MCF 10A (cell line): ENCODE measurements at regions of chr1 and their contacts with region 1.

Region 1: DNA sequence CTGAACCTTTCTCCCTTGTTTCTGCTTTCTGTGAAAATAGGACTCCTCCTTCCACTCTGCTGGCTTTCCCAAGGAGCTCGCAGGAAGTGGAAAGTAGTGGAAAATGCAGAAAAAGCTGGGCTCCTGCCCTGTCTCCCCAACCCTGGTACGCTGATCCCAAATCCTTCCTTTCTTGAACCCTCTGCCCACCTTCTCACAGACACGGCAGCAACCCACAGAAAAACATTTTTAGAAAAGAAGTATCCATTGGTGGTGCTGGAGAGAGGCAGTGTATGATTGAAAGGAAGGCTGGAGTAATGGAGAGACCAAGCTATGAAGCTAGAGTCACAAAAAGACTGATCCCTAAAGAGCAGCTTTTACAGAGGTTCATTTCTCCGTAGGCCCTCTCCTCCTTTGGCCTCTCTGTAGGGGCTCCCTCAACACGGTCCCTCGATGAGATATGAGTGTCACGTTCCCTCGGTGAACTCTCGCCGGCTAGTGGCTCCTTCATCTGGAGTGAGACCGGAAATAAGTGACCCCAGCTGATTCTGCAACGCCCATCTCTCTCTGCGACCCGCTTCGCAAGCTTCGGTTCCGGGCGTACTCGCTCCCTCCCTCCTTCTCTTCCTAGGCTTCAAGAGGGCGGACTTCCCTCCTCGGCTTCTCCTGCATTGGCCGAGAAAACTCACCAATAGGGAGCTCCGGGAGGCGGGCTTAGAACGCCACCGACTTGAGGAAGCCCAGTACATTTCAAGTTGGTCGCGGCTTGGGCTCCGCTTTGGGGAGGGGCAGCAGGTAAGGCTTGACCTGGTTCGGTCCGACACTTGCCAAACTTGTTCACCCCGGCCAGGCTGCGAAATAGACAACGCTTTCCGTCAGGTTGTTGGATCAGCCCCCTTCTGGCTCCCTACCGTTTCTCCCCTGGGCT is at the starts of genes ANKRD34A and POLR3GL:
- DNase-seq: peak; percentile 98
- H3K4me3 Mint-ChIP-seq: peak within 1 kb of the TSS; percentile 92
- H3K27ac Mint-ChIP-seq: peak within 1 kb of the TSS; percentile 96
- H3K4me1 Mint-ChIP-seq: peaks cover 42% of the 10 kb centered on the region
- H3K27me3 Mint-ChIP-seq: no peaks in the 10 kb centered on the region
- CTCF ChIP-seq: no peak
- total RNA-seq, gene ANKRD34A: 2.6 and 3.1 TPM in 2 replicates
- total RNA-seq, gene POLR3GL: 17.6 and 20.9 TPM in 2 replicates

Region 2: DNA sequence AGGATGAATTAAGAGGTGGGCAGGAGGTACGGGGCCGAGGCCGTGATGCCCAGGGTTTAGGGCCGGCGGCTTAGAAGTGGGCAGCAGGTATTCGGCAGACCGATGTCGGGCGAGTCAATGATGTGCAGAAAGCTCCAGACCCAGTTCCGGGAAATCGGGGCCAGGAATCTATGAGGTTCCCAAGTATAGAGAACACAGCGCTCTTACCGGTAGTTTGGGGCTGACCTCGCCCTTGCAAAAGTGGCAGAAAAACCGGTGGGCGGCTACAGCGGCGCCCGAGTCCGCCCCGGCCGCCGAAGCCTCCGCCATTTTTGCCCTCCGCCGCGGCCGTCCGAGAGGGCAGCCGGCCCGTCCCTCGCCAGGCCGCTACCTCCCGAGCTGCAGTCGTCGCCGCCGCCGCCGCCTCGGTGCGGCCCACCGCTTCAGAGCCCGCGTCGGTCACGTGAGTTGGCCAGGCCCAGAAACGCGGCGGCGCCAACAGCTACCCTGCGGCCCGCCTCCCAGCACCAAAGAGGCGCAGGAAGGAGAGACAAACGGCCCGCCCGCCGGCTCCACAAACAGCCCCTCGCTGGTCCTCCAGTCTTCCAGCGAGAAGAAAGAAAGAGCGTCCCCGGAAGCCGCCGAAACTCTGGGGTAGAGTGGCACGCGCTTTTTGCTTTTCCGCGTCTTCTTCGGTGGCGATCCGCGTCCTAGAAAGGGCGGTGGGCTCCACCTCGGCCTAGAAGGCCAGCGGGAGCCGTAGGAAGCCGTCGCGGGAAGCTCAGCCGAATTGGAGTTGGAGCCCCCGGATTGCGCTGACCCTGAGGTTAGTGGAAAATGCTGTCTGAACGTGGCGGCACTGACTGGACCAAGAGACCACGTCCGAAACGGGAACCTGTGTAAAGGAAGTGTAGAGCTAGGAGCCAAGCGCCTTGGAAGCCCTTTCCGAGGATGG is 140.4 kb before region 1 on chr1 and contains the starts of genes POLR3C and RNF115:
- CTCF ChIA-PET with region 1: no interaction called
- POLR2A ChIA-PET with region 1: interaction called, 27 read pairs
- intact Hi-C with region 1: no loop called
- DNase-seq: peak; percentile 95
- H3K4me3 Mint-ChIP-seq: peak within 1 kb of the TSS; percentile 90
- H3K27ac Mint-ChIP-seq: peak within 1 kb of the TSS; percentile 94
- H3K4me1 Mint-ChIP-seq: peaks cover 6% of the 10 kb centered on the region
- H3K27me3 Mint-ChIP-seq: no peaks in the 10 kb centered on the region
- CTCF ChIP-seq: no peak
- total RNA-seq, gene POLR3C: 67.9 and 96.8 TPM in 2 replicates
- total RNA-seq, gene RNF115: 16.8 and 19.5 TPM in 2 replicates

Region 3: GRCh38 chr1:145918144-145918992 is 45.9 kb before region 1 on chr1 and contains the start of gene PEX11B:
- CTCF ChIA-PET with region 1: interaction called, 8 read pairs
- POLR2A ChIA-PET with region 1: interaction called, 57 read pairs
- intact Hi-C with region 1: no loop called
- DNase-seq: peak; percentile 92
- H3K4me3 Mint-ChIP-seq: peak within 1 kb of the TSS; percentile 94
- H3K27ac Mint-ChIP-seq: peak within 1 kb of the TSS; percentile 99
- H3K4me1 Mint-ChIP-seq: peaks cover 43% of the 10 kb centered on the region
- H3K27me3 Mint-ChIP-seq: no peaks in the 10 kb centered on the region
- CTCF ChIP-seq: no peak
- total RNA-seq, gene PEX11B: 35.5 and 36.2 TPM in 2 replicates

Region 4: DNA sequence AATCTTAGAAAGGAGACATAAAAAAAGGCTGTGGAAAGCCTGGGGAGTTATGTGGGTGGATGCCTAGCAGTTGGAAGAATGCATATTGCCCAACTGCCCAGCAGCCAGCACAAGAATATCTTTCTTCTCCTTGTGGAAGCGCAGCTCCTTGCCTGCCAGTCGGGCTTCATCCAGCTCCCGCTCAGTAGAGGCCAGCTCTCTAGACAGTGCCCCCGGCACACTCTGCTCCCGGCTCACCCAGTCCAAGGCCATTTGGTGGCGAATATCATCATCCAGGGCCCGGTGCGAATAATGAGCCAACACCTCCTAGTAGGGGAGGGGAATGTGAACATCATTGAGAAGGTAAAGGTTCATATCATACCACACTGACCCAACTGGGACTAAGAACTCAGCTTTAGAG is 28.0 kb before region 1 on chr1:
- CTCF ChIA-PET with region 1: no interaction called
- POLR2A ChIA-PET with region 1: interaction called, 21 read pairs
- intact Hi-C with region 1: no loop called
- DNase-seq: no peak
- H3K4me3 Mint-ChIP-seq: no peak overlapping the region
- H3K27ac Mint-ChIP-seq: no peak overlapping the region
- H3K4me1 Mint-ChIP-seq: no peaks in the 10 kb centered on the region
- H3K27me3 Mint-ChIP-seq: no peaks in the 10 kb centered on the region
- CTCF ChIP-seq: no peak

Region 5: GRCh38 chr1:145985502-145986439 is 21.5 kb after region 1 on chr1:
- CTCF ChIA-PET with region 1: interaction called, 145 read pairs
- POLR2A ChIA-PET with region 1: interaction called, 226 read pairs
- intact Hi-C with region 1: no loop called
- DNase-seq: peak; percentile 88
- H3K4me3 Mint-ChIP-seq: peak overlapping the region; percentile 32
- H3K27ac Mint-ChIP-seq: peak overlapping the region; percentile 73
- H3K4me1 Mint-ChIP-seq: peaks cover 31% of the 10 kb centered on the region
- H3K27me3 Mint-ChIP-seq: no peaks in the 10 kb centered on the region
- CTCF ChIP-seq: no peak

Region 6: GRCh38 chr1:146001709-146002108 is 37.5 kb after region 1 on chr1:
- CTCF ChIA-PET with region 1: interaction called, 6 read pairs
- POLR2A ChIA-PET with region 1: interaction called, 226 read pairs
- intact Hi-C with region 1: no loop called
- DNase-seq: no peak
- H3K4me3 Mint-ChIP-seq: peak overlapping the region; percentile 61
- H3K27ac Mint-ChIP-seq: peak overlapping the region; percentile 94
- H3K4me1 Mint-ChIP-seq: peaks cover 69% of the 10 kb centered on the region
- H3K27me3 Mint-ChIP-seq: no peaks in the 10 kb centered on the region
- CTCF ChIP-seq: no peak

Region 7: GRCh38 chr1:146036965-146037646 is 72.9 kb after region 1 on chr1:
- CTCF ChIA-PET with region 1: interaction called, 5 read pairs
- POLR2A ChIA-PET with region 1: interaction called, 88 read pairs
- intact Hi-C with region 1: no loop called
- DNase-seq: peak; percentile 95
- H3K4me3 Mint-ChIP-seq: peak overlapping the region; percentile 99
- H3K27ac Mint-ChIP-seq: peak overlapping the region; percentile 98
- H3K4me1 Mint-ChIP-seq: peaks cover 11% of the 10 kb centered on the region
- H3K27me3 Mint-ChIP-seq: no peaks in the 10 kb centered on the region
- CTCF ChIP-seq: no peak